ENCODE measurements at regions of chr16 and their contacts with region 1.

Region 1: GRCh38 chr16:67546761-67547422 is 15.4 kb upstream of the CTCF start:
- DNase-seq: peak; percentile 42 to 87 (median 77)
- ATAC-seq: peak; percentile 24
- H3K4me3 ChIP-seq: peak overlapping the region in 1 of 2 experiments; percentile 51
- H3K4me3 Mint-ChIP-seq: peak overlapping the region; percentile 75
- H3K27ac ChIP-seq: peak overlapping the region; percentile 36 to 57
- H3K27ac Mint-ChIP-seq: peak overlapping the region; percentile 94
- H3K4me1 ChIP-seq: peaks cover 42% of the 10 kb centered on the region
- H3K4me1 Mint-ChIP-seq: peaks cover 53% of the 10 kb centered on the region
- H3K27me3 ChIP-seq: no peaks in the 10 kb centered on the region
- H3K27me3 Mint-ChIP-seq: no peaks in the 10 kb centered on the region
- CTCF ChIP-seq: peak; percentile 99

Region 2: GRCh38 chr16:67530013-67530939 is 16.6 kb before region 1 on chr16:
- CTCF ChIA-PET with region 1: interaction called, 92 read pairs
- POLR2A ChIA-PET with region 1: interaction called, 13 read pairs
- intact Hi-C with region 1: no loop called
- DNase-seq: peak in 3 of 9 experiments; percentile 41 to 66 (median 50)
- ATAC-seq: peak; percentile 45
- H3K4me3 ChIP-seq: peak overlapping the region; percentile 47 to 53
- H3K4me3 Mint-ChIP-seq: peak overlapping the region; percentile 81
- H3K27ac ChIP-seq: no peak overlapping the region
- H3K27ac Mint-ChIP-seq: peak overlapping the region; percentile 14
- H3K4me1 ChIP-seq: peaks cover 28% of the 10 kb centered on the region
- H3K4me1 Mint-ChIP-seq: peaks cover 22% of the 10 kb centered on the region
- H3K27me3 ChIP-seq: peaks cover 14 to 15% of the 10 kb centered on the region in 2 experiments
- H3K27me3 Mint-ChIP-seq: peaks cover 9% of the 10 kb centered on the region
- CTCF ChIP-seq: no peak

Region 3: GRCh38 chr16:67593288-67593687 is 46.4 kb after region 1 on chr16:
- CTCF ChIA-PET with region 1: interaction called, 18 read pairs
- POLR2A ChIA-PET with region 1: interaction called, 3 read pairs
- intact Hi-C with region 1: no loop called
- DNase-seq: no peak
- ATAC-seq: no peak
- H3K4me3 ChIP-seq: no peak overlapping the region
- H3K4me3 Mint-ChIP-seq: no peak overlapping the region
- H3K27ac ChIP-seq: no peak overlapping the region
- H3K27ac Mint-ChIP-seq: peak overlapping the region; percentile 22
- H3K4me1 ChIP-seq: peaks cover 10% of the 10 kb centered on the region
- H3K4me1 Mint-ChIP-seq: peaks cover 46% of the 10 kb centered on the region
- H3K27me3 ChIP-seq: no peaks in the 10 kb centered on the region
- H3K27me3 Mint-ChIP-seq: no peaks in the 10 kb centered on the region
- CTCF ChIP-seq: no peak

Region 4: GRCh38 chr16:67632415-67633172 is 85.7 kb after region 1 on chr16:
- CTCF ChIA-PET with region 1: interaction called, 241 read pairs
- POLR2A ChIA-PET with region 1: no interaction called
- intact Hi-C with region 1: no loop called
- DNase-seq: no peak
- ATAC-seq: no peak
- H3K4me3 ChIP-seq: no peak overlapping the region
- H3K4me3 Mint-ChIP-seq: no peak overlapping the region
- H3K27ac ChIP-seq: no peak overlapping the region
- H3K27ac Mint-ChIP-seq: no peak overlapping the region
- H3K4me1 ChIP-seq: no peaks in the 10 kb centered on the region
- H3K4me1 Mint-ChIP-seq: no peaks in the 10 kb centered on the region
- H3K27me3 ChIP-seq: no peaks in the 10 kb centered on the region
- H3K27me3 Mint-ChIP-seq: no peaks in the 10 kb centered on the region
- CTCF ChIP-seq: no peak

Region 5: DNA sequence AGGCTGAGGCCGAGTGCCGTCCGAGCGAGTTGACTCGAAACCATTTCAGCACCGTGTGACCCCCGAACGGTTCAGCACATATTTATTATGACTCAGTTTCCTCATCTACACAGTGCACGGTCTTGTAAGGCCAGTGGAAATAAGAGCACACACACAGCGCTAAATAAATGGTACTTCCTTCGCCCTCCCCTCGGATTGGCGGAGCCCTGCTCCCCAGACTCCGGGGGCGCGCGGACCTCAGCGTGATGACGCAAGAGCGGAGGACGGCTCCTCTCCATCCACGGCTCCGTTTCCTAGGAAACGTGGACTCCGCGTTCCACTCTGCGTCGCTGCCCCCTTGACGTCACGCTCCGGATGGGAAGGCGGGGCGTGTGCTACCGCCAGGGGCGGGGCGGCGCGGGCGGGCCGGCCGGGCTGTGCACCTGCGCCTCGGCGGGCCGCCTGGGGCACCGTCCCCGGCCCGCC is 113.7 kb after region 1 on chr16 and contains the start of gene PARD6A:
- CTCF ChIA-PET with region 1: interaction called, 25 read pairs
- POLR2A ChIA-PET with region 1: interaction called, 13 read pairs
- intact Hi-C with region 1: loop called in 1 of 2 experiments (anchors 1 kb)
- DNase-seq: peak; percentile 89 to 99 (median 95)
- ATAC-seq: peak; percentile 76
- H3K4me3 ChIP-seq: peak within 1 kb of the TSS; percentile 83 to 100
- H3K4me3 Mint-ChIP-seq: peak within 1 kb of the TSS; percentile 94
- H3K27ac ChIP-seq: peak within 1 kb of the TSS; percentile 92 to 100
- H3K27ac Mint-ChIP-seq: peak within 1 kb of the TSS; percentile 93
- H3K4me1 ChIP-seq: peaks cover 20% of the 10 kb centered on the region
- H3K4me1 Mint-ChIP-seq: peaks cover 23% of the 10 kb centered on the region
- H3K27me3 ChIP-seq: no peaks in the 10 kb centered on the region
- H3K27me3 Mint-ChIP-seq: no peaks in the 10 kb centered on the region
- CTCF ChIP-seq: no peak
- total RNA-seq, gene PARD6A: 3.0 to 3.1 TPM

Region 6: GRCh38 chr16:67736858-67737257 is 190.0 kb after region 1 on chr16:
- CTCF ChIA-PET with region 1: no interaction called
- POLR2A ChIA-PET with region 1: no interaction called
- intact Hi-C with region 1: no loop called
- DNase-seq: no peak
- ATAC-seq: no peak
- H3K4me3 ChIP-seq: no peak overlapping the region
- H3K4me3 Mint-ChIP-seq: no peak overlapping the region
- H3K27ac ChIP-seq: no peak overlapping the region
- H3K27ac Mint-ChIP-seq: no peak overlapping the region
- H3K4me1 ChIP-seq: no peaks in the 10 kb centered on the region
- H3K4me1 Mint-ChIP-seq: no peaks in the 10 kb centered on the region
- H3K27me3 ChIP-seq: no peaks in the 10 kb centered on the region
- H3K27me3 Mint-ChIP-seq: no peaks in the 10 kb centered on the region
- CTCF ChIP-seq: no peak